ENCODE measurements at regions of chr5 and their contacts with region 1.

Region 1: DNA sequence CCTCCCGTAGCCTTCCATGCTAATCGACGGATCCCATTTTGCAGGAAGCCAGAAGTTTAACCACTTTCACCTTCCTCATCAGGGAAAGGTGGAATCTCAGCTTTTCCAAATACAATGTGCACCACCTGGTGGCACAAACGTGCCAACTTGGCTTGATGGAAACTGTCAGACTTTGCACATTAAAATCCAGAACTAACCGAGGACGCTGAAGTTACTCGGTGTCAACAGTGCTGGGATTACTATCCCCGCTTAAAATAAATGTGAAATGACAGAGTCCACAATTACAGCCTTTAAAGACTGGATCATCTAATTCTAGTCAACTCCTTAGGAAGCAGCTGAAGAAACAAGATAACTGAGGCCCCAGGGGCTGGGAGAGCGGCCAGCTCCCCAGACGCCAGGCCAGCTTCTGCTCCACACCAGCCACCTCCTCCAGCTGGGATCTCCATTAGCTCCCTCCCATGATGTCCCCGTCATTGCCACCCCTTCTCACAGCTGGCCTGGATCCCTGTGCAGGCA is 50.1 kb upstream of the RETREG1 start:
- DNase-seq: peak in 1 of 2 donors; percentile 50
- H3K4me3 ChIP-seq: peak overlapping the region in 2 of 3 donors; percentile 33 to 43
- H3K27ac ChIP-seq: peak overlapping the region; percentile 54 to 75
- H3K4me1 ChIP-seq: no peaks in the 10 kb centered on the region
- H3K27me3 ChIP-seq: no peaks in the 10 kb centered on the region
- CTCF ChIP-seq: peak; percentile 64 to 79 (median 75)
- POLR2A ChIP-seq: no peak

Region 2: GRCh38 chr5:16489322-16489791 is 177.6 kb before region 1 on chr5:
- intact Hi-C with region 1: loop called (anchors 10 kb)
- DNase-seq: no peak
- H3K4me3 ChIP-seq: no peak overlapping the region
- H3K27ac ChIP-seq: no peak overlapping the region
- H3K4me1 ChIP-seq: peaks cover 0 to 16% of the 10 kb centered on the region in 2 donors
- H3K27me3 ChIP-seq: no peaks in the 10 kb centered on the region
- CTCF ChIP-seq: peak; percentile 68 to 81 (median 72)
- POLR2A ChIP-seq: no peak